Activated T-helper 1 cell treated with anti-CD3 and anti-CD28 coated beads, Interleukin-12 subunit alpha, Interleukin-12 subunit beta, Interleukin-2, Interleukin-4 antibody, amounts not matched to agents 30 ng/mL and 10 ng/mL and 1 ng/mL, durations not matched to agents 14 hours and 24 hours and 36 hours (primary cell): ENCODE measurements at regions of chr4 and their contacts with region 1.

Region 1: GRCh38 chr4:70704331-70705145 is 16.2 kb downstream of the UTP3 start:
- DNase-seq: peak; percentile 38
- H3K4me3 Mint-ChIP-seq: peak overlapping the region; percentile 76
- H3K27ac Mint-ChIP-seq: peak overlapping the region; percentile 83
- H3K4me1 Mint-ChIP-seq: peaks cover 24% of the 10 kb centered on the region
- H3K27me3 Mint-ChIP-seq: peaks cover 3% of the 10 kb centered on the region

Region 2: DNA sequence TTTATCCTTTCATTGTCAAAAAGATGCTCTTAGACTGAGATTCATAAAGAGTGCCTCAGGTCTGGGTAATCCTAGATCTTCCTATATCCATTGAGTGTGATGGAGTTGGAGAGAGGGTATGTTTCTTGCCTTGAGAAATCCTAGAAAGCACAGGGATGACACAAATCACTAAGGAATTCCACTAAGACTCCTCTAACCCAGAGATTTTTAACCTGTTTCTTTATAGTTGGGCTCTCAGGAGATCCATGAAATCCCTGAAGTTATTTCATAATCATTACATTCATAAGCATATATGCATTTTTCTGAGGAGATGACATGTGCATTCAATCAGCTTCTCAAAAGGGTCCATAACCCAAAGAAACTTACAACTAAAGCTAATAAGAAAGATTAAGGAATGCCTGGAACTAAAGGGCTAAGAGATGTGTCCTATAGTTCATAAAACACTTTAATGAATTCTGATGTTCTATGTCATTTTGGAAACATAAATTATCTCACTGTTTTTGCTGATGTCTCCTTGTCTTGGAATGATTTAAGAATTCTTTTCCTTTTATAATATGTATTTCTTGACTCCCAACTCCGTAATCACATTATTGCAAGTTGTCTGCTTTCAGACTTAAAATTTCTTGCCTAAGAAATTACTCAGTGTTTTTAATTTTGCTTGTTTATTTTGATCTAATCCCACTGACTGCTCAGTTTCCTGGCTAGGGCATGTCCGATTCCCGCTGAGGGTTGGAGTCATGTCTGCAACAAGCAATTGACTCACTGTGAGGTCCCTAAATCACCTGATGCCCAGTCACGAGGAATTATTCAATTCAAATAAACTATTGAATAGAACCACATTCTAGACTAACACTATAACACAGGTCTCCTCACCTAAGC is 188.9 kb before region 1 on chr4:
- intact Hi-C with region 1: no loop called
- DNase-seq: no peak
- H3K4me3 Mint-ChIP-seq: no peak overlapping the region
- H3K27ac Mint-ChIP-seq: no peak overlapping the region
- H3K4me1 Mint-ChIP-seq: no peaks in the 10 kb centered on the region
- H3K27me3 Mint-ChIP-seq: no peaks in the 10 kb centered on the region

Region 3: DNA sequence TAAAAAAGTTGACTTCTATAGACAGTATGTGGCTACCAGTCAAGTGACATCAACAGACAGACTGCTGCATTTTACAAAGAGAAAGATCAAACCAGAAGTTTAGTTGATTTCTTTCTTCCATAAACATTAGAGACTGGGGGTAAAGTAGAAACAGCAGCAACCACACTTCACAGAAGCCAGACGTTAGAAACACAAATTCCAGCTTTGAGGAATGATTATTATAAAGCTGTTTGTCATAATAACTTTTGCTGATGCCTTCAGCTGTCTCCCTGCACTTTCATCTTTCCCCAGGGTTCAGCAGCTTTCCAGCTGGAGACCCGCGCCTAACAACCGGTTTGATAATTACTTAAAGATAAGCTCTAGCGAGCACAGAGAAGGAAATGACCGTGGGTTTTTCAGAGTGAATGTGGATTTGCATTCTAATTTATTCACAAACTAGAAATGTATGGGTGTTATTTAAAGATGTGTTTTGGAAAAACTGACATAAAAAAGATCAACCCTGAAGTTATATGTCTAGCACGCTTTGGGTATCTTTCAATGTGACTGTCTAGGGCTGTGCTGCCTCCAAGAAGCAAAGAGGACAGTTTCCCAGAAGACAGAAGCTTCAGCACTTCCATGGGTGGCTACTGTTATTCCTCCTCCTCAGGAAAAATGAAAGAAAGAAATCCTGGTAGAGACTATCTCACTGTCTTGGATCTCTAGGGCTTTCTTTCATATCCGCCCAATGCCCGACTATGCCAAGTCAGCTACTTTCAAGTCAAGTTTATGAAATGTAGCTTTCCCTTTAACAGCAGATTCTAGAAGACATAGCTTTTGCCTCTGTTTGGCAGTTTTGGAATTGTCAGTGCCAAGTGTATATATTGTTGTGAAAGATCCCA is 91.0 kb before region 1 on chr4:
- intact Hi-C with region 1: loop called (anchors 5 kb)
- DNase-seq: no peak
- H3K4me3 Mint-ChIP-seq: no peak overlapping the region
- H3K27ac Mint-ChIP-seq: no peak overlapping the region
- H3K4me1 Mint-ChIP-seq: peaks cover 12% of the 10 kb centered on the region
- H3K27me3 Mint-ChIP-seq: peaks cover 28% of the 10 kb centered on the region

Region 4: DNA sequence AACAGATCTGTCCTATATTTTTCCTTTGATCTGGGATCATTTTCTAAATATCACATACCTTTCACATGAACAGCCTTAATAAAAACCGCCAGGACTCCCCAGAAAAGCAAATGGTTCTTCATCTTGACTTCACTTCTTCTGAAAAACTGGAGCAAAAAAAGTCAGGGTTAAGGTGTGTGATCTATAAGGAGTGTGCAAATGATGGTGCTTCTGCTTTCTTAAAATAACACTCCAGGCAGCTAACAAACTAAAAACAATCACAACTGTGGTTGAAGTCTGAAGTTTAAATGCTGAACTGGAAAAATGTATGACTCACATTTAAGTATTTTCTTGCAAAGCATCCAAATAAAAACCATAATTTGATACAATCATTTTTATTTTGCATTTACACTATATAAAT is 38.2 kb before region 1 on chr4 and contains the start of gene JCHAIN:
- intact Hi-C with region 1: no loop called
- DNase-seq: no peak
- H3K4me3 Mint-ChIP-seq: no peak within 1 kb of the TSS
- H3K27ac Mint-ChIP-seq: no peak within 1 kb of the TSS
- H3K4me1 Mint-ChIP-seq: peaks cover 7% of the 10 kb centered on the region
- H3K27me3 Mint-ChIP-seq: peaks cover 4% of the 10 kb centered on the region
- total RNA-seq, gene JCHAIN: not detected in 2 replicates

Region 5: GRCh38 chr4:70734168-70734954 is 29.8 kb after region 1 on chr4:
- intact Hi-C with region 1: loop called (anchors 1 kb)
- DNase-seq: peak; percentile 29
- H3K4me3 Mint-ChIP-seq: peak overlapping the region; percentile 68
- H3K27ac Mint-ChIP-seq: peak overlapping the region; percentile 33
- H3K4me1 Mint-ChIP-seq: peaks cover 36% of the 10 kb centered on the region
- H3K27me3 Mint-ChIP-seq: no peaks in the 10 kb centered on the region

Region 6: DNA sequence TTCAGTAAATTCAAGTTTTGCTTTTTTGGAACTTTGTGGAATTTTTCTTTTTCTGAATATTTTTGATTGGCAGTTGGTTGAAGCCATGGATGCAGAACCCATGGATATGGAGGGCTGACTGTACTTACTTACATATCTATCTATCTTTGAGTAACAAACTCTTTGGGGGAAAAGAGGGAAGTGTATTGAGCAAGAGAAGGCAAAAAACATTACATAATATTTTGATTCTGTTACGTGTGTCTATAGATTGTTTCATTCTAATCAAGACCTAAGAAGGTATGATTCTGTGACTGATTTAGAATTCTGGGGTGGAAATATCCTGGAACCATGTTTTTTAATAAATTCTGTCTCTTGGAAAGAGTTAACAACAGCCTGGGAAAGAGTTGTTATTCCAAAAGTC is 103.6 kb after region 1 on chr4:
- intact Hi-C with region 1: no loop called
- DNase-seq: no peak
- H3K4me3 Mint-ChIP-seq: no peak overlapping the region
- H3K27ac Mint-ChIP-seq: no peak overlapping the region
- H3K4me1 Mint-ChIP-seq: peaks cover under 1% of the 10 kb centered on the region
- H3K27me3 Mint-ChIP-seq: no peaks in the 10 kb centered on the region

Region 7: GRCh38 chr4:70979445-70980008 is 275.0 kb after region 1 on chr4:
- intact Hi-C with region 1: no loop called
- DNase-seq: no peak
- H3K4me3 Mint-ChIP-seq: no peak overlapping the region
- H3K27ac Mint-ChIP-seq: no peak overlapping the region
- H3K4me1 Mint-ChIP-seq: no peaks in the 10 kb centered on the region
- H3K27me3 Mint-ChIP-seq: no peaks in the 10 kb centered on the region